ENCODE measurements at regions of chr2 and their contacts with region 1.

Region 1: GRCh38 chr2:151775057-151775740 is 40.9 kb upstream of the NEB start:
- DNase-seq: no peak
- H3K4me3 ChIP-seq: no peak overlapping the region
- H3K27ac ChIP-seq: no peak overlapping the region
- H3K4me1 ChIP-seq: no peaks in the 10 kb centered on the region
- H3K27me3 ChIP-seq: no peaks in the 10 kb centered on the region
- CTCF ChIP-seq: no peak
- EP300 ChIP-seq: no peak
- POLR2A ChIP-seq: no peak

Region 2: DNA sequence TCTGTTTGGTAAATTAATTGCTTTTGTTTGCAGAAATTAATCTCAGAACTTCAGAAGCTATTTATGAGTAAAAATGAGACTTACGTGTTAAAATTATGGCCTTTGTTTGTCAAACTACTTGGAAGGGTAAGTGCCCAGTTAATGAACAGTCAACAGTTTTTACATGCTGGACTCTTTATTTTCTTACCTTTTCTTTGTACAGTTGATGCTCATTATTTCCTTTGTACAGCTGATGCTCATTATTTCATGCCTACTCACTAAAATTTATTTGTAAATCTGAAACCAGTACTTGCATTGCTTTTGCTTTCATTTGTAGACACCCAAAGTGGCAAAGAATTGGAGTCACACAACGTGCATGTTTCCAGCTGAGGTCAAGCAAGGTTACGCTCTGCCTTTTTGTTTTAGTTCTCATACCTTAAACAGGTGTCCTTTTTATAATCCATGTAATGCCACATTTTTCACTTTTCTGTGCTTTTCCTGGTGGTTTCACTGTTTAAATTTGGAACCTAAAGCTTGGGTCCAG is 352.2 kb before region 1 on chr2:
- intact Hi-C with region 1: no loop called
- DNase-seq: no peak
- H3K4me3 ChIP-seq: no peak overlapping the region
- H3K27ac ChIP-seq: no peak overlapping the region
- H3K4me1 ChIP-seq: peaks cover 2% of the 10 kb centered on the region
- H3K27me3 ChIP-seq: no peaks in the 10 kb centered on the region
- CTCF ChIP-seq: no peak
- EP300 ChIP-seq: no peak
- POLR2A ChIP-seq: no peak

Region 3: DNA sequence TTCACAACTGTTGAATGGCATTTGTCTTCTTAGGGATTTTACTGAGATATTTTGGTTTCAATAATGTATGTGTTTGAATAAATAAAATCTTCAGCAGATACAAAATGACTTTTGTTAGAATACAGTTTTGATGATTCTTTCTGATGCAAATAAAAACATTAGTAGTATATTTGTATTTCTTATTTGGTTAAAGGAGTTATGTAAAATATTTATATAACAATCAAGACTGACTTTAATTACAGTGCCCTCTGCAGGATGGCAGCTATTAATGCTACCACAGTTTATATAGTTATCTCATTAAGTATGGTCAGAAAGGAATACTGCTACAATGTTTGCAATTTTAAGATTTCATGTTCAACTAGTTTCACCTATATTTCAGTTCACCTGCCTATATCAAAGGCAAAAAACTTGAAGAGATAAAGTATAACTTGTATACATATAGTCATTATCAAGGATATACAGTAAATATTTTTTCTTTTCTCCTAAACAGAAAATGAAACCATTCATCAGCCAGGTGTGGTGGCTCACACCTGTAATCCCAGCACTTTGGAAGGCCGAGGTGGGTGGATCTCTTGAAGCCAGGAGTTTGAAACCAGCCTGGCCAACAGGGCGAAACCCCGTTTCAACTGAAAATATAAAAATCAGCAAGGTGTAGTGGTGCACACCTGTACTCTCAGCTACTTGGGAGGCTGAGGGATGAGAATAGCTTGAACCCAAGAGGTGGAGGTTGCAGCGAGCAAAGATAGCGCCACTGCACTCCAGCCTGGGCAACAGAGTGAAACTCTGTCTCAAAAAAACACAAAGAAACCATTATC is 33.3 kb after region 1 on chr2:
- intact Hi-C with region 1: loop called in 1 of 4 experiments (anchors 1 kb)
- DNase-seq: no peak
- H3K4me3 ChIP-seq: no peak overlapping the region
- H3K27ac ChIP-seq: no peak overlapping the region
- H3K4me1 ChIP-seq: no peaks in the 10 kb centered on the region
- H3K27me3 ChIP-seq: no peaks in the 10 kb centered on the region
- CTCF ChIP-seq: no peak
- EP300 ChIP-seq: no peak
- POLR2A ChIP-seq: no peak

Region 4: GRCh38 chr2:151918308-151918707 is 143.1 kb after region 1 on chr2:
- intact Hi-C with region 1: no loop called
- DNase-seq: no peak
- H3K4me3 ChIP-seq: no peak overlapping the region
- H3K27ac ChIP-seq: no peak overlapping the region
- H3K4me1 ChIP-seq: no peaks in the 10 kb centered on the region
- H3K27me3 ChIP-seq: no peaks in the 10 kb centered on the region
- CTCF ChIP-seq: no peak
- EP300 ChIP-seq: no peak
- POLR2A ChIP-seq: no peak

Measured in ovary (tissue), 10 donors.